ENCODE measurements at regions of chr10 and their contacts with region 1.

Region 1: DNA sequence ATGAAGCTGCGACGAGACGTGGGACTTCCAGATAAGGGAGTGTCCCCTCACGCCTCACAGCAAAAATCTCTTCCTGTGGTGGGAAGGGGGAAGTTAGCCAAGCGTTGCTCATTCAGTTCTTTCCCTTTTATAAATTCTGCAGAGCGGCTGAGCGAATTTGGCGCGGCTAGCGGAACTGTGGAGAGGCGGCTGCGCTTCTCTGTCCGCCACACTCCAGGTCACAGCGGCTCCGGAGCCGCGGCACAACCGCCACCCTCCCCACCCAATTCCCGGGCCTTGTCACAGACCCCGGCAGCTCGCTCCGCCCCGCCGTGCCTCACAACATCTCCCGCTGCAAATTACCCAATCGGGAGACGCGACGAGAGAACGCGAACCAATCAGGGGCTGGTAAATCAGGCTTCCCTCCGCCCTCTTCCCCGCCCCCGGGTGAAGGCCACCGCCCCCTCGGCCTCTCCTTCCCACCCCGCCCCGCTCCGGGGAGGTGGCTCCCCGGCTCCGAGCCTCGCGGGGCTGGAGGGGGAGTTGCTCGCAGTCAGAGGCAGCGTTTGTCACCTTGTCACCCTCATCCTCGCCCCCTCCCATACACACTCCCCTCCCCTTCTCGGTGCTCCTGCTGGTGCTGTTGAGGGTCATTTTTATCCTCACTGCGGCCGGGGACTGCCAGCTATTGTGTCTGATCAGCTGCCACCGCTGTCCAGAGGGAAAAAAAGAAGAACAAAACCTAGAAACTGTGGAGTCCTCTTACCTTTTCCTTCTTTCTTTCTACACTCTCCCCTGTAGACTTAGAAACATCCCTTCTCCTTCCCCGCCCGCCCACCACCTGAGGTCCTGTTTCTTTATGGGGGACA is 918 bp upstream of the ARHGAP21 start:
- DNase-seq: peak; percentile 87 to 94 (median 92)
- ATAC-seq: peak; percentile 93
- H3K4me3 ChIP-seq: peak overlapping the region; percentile 93
- H3K4me3 Mint-ChIP-seq: peak overlapping the region; percentile 89 to 96 (median 94)
- H3K27ac ChIP-seq: peak overlapping the region; percentile 65
- H3K27ac Mint-ChIP-seq: peak overlapping the region; percentile 45 to 96 (median 92)
- H3K4me1 ChIP-seq: peaks cover 0 to 12% of the 10 kb centered on the region in 2 donors
- H3K4me1 Mint-ChIP-seq: peaks cover 6 to 28% (median 19%) of the 10 kb centered on the region in 7 donors
- H3K27me3 ChIP-seq: no peaks in the 10 kb centered on the region
- H3K27me3 Mint-ChIP-seq: peaks cover 0 to 6% (median 0%) of the 10 kb centered on the region in 5 donors

Region 2: DNA sequence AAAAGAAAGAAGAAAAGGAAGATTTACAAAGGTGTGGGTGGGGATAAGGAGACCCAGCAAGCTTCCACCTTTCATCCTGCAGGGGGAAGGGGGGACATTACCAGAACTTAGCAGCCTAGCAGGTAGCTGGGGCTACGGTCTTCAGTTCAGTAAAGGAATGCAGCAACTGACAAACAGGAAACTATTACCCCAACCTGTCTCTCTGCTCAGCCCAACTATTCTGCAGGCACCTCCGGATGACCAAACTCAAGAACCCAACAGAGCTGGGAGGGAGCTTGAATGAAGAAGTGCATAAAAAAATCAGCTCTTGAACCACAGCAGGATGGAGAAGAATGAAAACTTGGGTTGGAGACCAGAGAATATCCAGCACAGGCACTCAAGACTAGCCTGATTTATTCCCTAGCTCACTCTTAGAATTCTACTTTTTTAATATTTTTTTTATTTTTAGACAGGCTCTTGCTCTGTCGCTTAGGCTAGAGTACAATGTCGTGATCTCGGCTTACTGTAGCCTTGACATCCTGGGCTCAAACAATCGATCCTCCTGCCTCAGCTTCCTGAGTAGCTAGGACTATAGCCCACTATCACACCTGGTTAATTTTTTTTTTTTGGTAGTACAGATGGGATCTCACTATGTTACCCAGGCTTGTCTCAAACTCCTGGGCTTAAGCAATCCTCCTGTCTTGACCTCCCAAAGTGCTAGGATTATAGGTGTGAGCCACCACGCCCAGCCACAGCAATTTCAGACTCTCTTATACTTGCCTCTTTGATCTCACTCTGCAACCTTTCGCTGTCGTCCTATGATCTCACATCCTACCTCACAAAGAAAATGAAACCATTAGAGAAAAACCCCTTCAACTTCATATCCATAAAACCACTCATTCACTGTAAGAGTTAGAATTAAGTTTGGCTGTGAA is 1361.5 kb before region 1 on chr10:
- CTCF ChIA-PET with region 1: no interaction called
- POLR2A ChIA-PET with region 1: no interaction called
- intact Hi-C with region 1: loop called in 1 of 2 experiments (anchors 5 kb)
- DNase-seq: peak in 8 of 9 donors; percentile 51 to 77 (median 68)
- ATAC-seq: peak; percentile 90
- H3K4me3 ChIP-seq: peak overlapping the region; percentile 22
- H3K4me3 Mint-ChIP-seq: peak overlapping the region; percentile 60 to 90 (median 78)
- H3K27ac ChIP-seq: peak overlapping the region; percentile 68
- H3K27ac Mint-ChIP-seq: peak overlapping the region; percentile 78 to 98 (median 92)
- H3K4me1 ChIP-seq: peaks cover 30 to 33% of the 10 kb centered on the region in 2 donors
- H3K4me1 Mint-ChIP-seq: peaks cover 34 to 61% (median 49%) of the 10 kb centered on the region in 7 donors
- H3K27me3 ChIP-seq: no peaks in the 10 kb centered on the region
- H3K27me3 Mint-ChIP-seq: no peaks in the 10 kb centered on the region

Region 3: DNA sequence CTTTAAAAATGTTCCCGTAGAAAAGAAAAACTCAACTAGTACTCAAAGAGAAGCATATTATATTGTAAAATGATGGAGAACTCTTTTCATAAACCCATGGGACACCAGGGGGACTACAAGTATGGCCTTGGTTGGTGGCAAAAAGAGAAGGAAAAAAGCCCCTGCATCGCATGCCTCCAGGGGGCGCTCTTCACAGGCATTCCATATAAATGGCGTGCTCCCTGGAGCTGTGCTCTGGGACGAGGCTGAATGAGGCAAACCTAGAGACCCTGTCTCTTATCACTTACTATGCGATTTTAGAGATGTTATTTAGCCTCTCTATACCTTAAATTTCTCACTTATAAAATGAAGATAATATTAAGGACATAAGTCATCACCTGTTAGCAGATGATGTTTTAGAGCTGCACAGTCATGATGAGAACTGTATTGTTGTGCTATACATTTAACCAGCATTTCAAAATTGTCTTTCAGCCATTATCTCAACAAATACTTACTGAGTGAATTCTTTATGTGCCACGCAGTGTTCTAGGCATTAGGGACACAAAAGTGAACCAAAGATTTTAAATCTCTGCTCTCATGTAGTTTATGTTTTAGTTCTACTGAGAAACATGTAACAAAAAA is 106.7 kb before region 1 on chr10:
- CTCF ChIA-PET with region 1: no interaction called
- POLR2A ChIA-PET with region 1: interaction called, 11 read pairs
- intact Hi-C with region 1: loop called (anchors 1 kb)
- DNase-seq: peak; percentile 28 to 62 (median 46)
- ATAC-seq: peak; percentile 58
- H3K4me3 ChIP-seq: no peak overlapping the region
- H3K4me3 Mint-ChIP-seq: peak overlapping the region in 9 of 10 donors; percentile 34 to 75 (median 69)
- H3K27ac ChIP-seq: peak overlapping the region; percentile 5
- H3K27ac Mint-ChIP-seq: peak overlapping the region in 8 of 9 donors; percentile 65 to 97 (median 91)
- H3K4me1 ChIP-seq: peaks cover 0 to 16% of the 10 kb centered on the region in 2 donors
- H3K4me1 Mint-ChIP-seq: peaks cover 11 to 55% (median 42%) of the 10 kb centered on the region in 7 donors
- H3K27me3 ChIP-seq: no peaks in the 10 kb centered on the region
- H3K27me3 Mint-ChIP-seq: no peaks in the 10 kb centered on the region

Region 4: DNA sequence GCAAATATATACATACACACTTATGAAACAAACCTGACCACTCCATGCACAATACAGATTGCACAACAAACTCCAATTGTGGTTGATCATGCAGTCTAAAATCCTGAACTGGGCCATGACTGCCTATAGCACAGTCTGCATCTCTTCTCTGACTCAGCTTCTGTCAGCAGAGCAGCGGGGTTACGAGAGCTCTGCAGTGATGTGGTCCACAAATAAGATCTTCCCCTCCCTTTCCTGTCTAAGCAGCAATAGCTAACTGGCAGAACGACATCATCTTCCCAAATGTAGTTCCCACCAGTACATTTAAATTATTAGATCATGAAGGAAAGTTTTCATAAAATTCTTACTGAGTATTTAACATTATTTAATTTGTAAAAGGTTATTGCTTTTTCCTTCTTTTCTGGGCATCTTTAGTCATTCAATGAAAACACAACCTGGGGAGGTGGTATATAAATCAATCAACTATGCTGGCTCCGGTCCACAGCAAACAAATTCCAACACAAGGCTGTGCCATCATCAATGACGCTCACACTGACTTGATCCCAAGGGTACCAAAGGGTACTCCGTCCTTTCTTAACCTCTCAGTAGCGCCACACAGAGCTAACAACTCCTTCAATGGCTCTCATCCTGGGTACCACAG is 18.0 kb before region 1 on chr10:
- CTCF ChIA-PET with region 1: no interaction called
- POLR2A ChIA-PET with region 1: interaction called, 4 read pairs
- intact Hi-C with region 1: loop called in 1 of 2 experiments (anchors 1 kb)
- DNase-seq: peak in 4 of 9 donors; percentile 13 to 31 (median 24)
- ATAC-seq: peak; percentile 93
- H3K4me3 ChIP-seq: no peak overlapping the region
- H3K4me3 Mint-ChIP-seq: no peak overlapping the region
- H3K27ac ChIP-seq: no peak overlapping the region
- H3K27ac Mint-ChIP-seq: no peak overlapping the region
- H3K4me1 ChIP-seq: no peaks in the 10 kb centered on the region
- H3K4me1 Mint-ChIP-seq: peaks cover under 1 to 22% (median 3%) of the 10 kb centered on the region in 7 donors
- H3K27me3 ChIP-seq: no peaks in the 10 kb centered on the region
- H3K27me3 Mint-ChIP-seq: no peaks in the 10 kb centered on the region

Region 5: GRCh38 chr10:24748214-24748613 is 23.6 kb after region 1 on chr10:
- CTCF ChIA-PET with region 1: no interaction called
- POLR2A ChIA-PET with region 1: no interaction called
- intact Hi-C with region 1: no loop called
- DNase-seq: no peak
- ATAC-seq: no peak
- H3K4me3 ChIP-seq: no peak overlapping the region
- H3K4me3 Mint-ChIP-seq: no peak overlapping the region
- H3K27ac ChIP-seq: no peak overlapping the region
- H3K27ac Mint-ChIP-seq: no peak overlapping the region
- H3K4me1 ChIP-seq: no peaks in the 10 kb centered on the region
- H3K4me1 Mint-ChIP-seq: peaks cover 0 to 5% (median 4%) of the 10 kb centered on the region in 7 donors
- H3K27me3 ChIP-seq: no peaks in the 10 kb centered on the region
- H3K27me3 Mint-ChIP-seq: no peaks in the 10 kb centered on the region

Region 6: GRCh38 chr10:24882047-24882698 is 157.6 kb after region 1 on chr10:
- CTCF ChIA-PET with region 1: no interaction called
- POLR2A ChIA-PET with region 1: interaction called, 3 read pairs
- intact Hi-C with region 1: loop called (anchors 1 to 5 kb)
- DNase-seq: peak in 7 of 9 donors; percentile 42 to 68 (median 63)
- ATAC-seq: peak; percentile 81
- H3K4me3 ChIP-seq: peak overlapping the region; percentile 44
- H3K4me3 Mint-ChIP-seq: peak overlapping the region; percentile 72 to 88 (median 86)
- H3K27ac ChIP-seq: peak overlapping the region; percentile 53
- H3K27ac Mint-ChIP-seq: peak overlapping the region; percentile 36 to 99 (median 95)
- H3K4me1 ChIP-seq: peaks cover 15 to 54% of the 10 kb centered on the region in 2 donors
- H3K4me1 Mint-ChIP-seq: peaks cover 27 to 72% (median 65%) of the 10 kb centered on the region in 7 donors
- H3K27me3 ChIP-seq: no peaks in the 10 kb centered on the region
- H3K27me3 Mint-ChIP-seq: no peaks in the 10 kb centered on the region

Region 7: DNA sequence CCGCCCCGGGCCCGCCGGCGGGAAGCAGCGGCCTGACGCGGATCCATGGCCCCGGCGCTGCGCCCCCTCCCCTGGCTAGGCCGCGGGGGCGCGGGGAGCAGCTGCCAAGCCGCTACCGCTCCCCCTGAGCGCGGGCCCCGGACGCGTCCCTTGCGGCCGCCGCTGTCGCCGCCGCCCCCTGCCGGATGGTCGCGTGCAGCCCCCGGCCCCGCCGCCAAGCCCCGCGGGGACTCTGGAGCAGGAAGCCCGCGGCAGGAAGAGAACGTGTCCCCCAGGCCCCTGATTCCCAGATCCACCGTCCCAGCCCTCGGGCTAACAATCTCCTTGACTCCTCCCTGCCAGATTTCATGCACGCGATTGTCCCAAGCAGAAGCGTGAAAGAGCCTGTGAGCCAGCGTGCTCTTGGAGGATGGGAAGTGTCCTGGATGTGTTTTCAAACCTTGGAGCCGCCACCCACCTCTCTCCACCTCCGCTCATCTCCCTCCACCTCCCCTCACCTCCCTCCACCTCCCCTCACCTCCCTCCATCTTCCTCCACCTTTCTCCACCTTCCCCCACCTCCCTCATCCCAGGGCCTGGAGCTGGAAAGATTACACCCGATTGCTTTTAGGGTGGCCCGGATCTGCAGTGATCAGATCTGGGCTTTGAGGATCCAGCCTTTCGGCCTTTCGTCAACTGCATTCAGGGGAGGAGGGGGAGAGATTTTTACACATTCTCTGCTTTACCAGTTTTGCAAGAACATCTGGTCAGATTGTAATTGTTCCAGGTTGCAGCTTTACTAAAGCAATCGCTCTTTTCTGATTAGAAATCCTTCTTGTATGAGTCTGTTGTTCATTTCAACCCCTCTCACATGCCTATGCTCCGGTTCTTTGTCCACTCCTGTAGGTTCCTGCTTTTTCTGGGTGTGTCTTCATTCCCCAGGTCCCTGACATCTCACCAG is 228.4 kb after region 1 on chr10:
- CTCF ChIA-PET with region 1: interaction called, 8 read pairs
- POLR2A ChIA-PET with region 1: interaction called, 3 read pairs
- intact Hi-C with region 1: loop called (anchors 1 kb)
- DNase-seq: peak; percentile 31 to 66 (median 55)
- ATAC-seq: peak; percentile 89
- H3K4me3 ChIP-seq: peak overlapping the region; percentile 55
- H3K4me3 Mint-ChIP-seq: peak overlapping the region; percentile 76 to 89 (median 86)
- H3K27ac ChIP-seq: peak overlapping the region; percentile 59
- H3K27ac Mint-ChIP-seq: peak overlapping the region; percentile 49 to 91 (median 83)
- H3K4me1 ChIP-seq: peaks cover 4 to 6% of the 10 kb centered on the region in 2 donors
- H3K4me1 Mint-ChIP-seq: peaks cover 7 to 30% (median 18%) of the 10 kb centered on the region in 7 donors
- H3K27me3 ChIP-seq: no peaks in the 10 kb centered on the region
- H3K27me3 Mint-ChIP-seq: no peaks in the 10 kb centered on the region

Region 8: DNA sequence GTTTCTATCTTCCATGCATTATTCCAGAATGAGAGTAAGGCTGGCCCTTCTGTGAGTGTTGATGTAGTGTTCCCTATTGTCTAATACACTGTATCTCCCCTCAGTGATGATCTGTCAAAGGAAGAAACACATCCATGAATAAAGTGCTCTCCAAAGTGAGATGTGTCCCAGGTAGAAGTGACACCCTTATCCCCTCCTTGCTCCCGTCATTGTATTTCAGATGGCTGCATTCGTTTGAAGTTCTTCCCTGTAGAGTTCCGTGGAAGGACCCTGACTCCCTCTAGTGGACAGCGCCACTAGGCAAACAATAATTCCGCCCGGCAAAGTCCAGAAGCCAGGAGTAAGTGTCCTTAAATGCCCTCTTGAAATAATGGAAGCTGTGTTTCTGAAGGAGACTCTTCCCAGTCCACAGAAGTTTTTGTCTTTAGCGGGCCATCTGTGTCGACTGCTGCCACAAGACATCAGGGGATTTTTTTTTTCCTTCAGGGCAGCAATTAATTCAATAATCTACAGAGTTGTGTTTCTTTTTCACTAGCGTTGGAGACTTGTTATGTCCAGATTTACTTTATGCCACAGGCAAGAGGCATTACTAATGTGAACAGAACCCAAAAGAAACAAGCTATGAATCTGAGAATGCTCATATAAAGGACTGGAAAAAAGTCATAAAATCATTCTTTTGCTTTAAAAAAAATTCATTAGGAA is 356.4 kb after region 1 on chr10:
- CTCF ChIA-PET with region 1: interaction called, 3 read pairs
- POLR2A ChIA-PET with region 1: no interaction called
- intact Hi-C with region 1: loop called (anchors 1 to 2 kb)
- DNase-seq: peak; percentile 4 to 53 (median 42)
- ATAC-seq: peak; percentile 79
- H3K4me3 ChIP-seq: no peak overlapping the region
- H3K4me3 Mint-ChIP-seq: no peak overlapping the region
- H3K27ac ChIP-seq: no peak overlapping the region
- H3K27ac Mint-ChIP-seq: no peak overlapping the region
- H3K4me1 ChIP-seq: peaks cover 0 to 4% of the 10 kb centered on the region in 2 donors
- H3K4me1 Mint-ChIP-seq: peaks cover 0 to 8% (median 4%) of the 10 kb centered on the region in 7 donors
- H3K27me3 ChIP-seq: peaks cover 0 to 4% of the 10 kb centered on the region in 2 donors
- H3K27me3 Mint-ChIP-seq: peaks cover 0 to 23% (median 5%) of the 10 kb centered on the region in 5 donors

Measured in naive thymus-derived CD4-positive, alpha-beta T cell (primary cell).